ENCODE measurements at regions of chr19 and their contacts with region 1.

Region 1: GRCh38 chr19:17859533-17860330 is at the start of gene RPL18A:
- DNase-seq: peak; percentile 85
- ATAC-seq: peak; percentile 91
- H3K4me3 Mint-ChIP-seq: peak within 1 kb of the TSS; percentile 99
- H3K27ac Mint-ChIP-seq: peak within 1 kb of the TSS; percentile 98
- H3K4me1 Mint-ChIP-seq: peaks cover 47% of the 10 kb centered on the region
- H3K27me3 Mint-ChIP-seq: no peaks in the 10 kb centered on the region
- CTCF ChIP-seq: no peak
- total RNA-seq, gene RPL18A: 4,113 and 4,404 TPM in 2 replicates

Region 2: DNA sequence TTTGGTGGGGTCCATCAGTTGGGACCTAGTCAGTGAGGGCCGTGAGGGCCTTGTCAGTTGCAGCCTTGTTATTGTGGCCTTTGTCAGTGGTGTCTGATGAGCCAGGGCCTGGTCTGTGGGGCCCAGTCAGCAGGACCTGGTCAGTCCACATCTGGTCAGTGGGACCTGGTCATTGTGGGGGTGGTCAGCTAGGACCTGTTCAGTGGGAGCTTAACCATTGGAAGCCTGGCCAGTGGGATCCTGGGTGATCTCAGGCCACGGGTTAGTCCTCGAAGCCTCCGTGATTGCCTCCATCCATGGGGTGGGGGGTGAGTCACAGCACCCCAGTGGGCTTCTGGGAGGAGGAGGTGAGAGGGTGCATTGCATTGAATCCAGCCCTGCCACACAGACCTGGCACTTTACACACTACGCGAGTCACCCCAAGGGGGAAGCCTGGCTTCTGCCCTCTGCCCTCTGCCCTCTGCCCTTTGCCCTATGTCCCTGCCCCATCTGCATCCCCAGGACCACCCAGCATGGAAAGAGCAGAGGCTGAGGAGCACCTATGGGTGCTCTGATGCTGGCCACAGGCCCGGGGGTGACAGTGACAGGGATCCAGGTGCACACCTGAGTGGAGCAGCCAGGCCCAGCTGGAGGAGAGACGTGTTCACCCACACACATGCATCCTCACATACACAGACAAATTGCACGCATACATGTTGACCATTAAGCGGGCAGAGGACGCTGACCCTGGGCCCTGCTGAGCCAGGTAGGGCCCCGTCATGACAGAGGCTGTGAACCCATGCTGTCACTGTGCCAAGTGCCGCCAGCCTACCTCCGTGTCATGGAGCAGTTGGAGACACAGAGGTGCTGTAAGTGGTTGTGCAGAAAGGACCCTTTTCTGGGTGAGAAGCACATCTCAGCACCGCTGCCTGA is 1843.2 kb before region 1 on chr19:
- CTCF ChIA-PET with region 1: no interaction called
- POLR2A ChIA-PET with region 1: no interaction called
- intact Hi-C with region 1: no loop called
- DNase-seq: no peak
- ATAC-seq: no peak
- H3K4me3 Mint-ChIP-seq: no peak overlapping the region
- H3K27ac Mint-ChIP-seq: no peak overlapping the region
- H3K4me1 Mint-ChIP-seq: no peaks in the 10 kb centered on the region
- H3K27me3 Mint-ChIP-seq: no peaks in the 10 kb centered on the region
- CTCF ChIP-seq: no peak

Region 3: GRCh38 chr19:17448131-17448967 is 411.4 kb before region 1 on chr19 and contains the start of gene TMEM221:
- CTCF ChIA-PET with region 1: no interaction called
- POLR2A ChIA-PET with region 1: no interaction called
- intact Hi-C with region 1: loop called (anchors 5 kb)
- DNase-seq: peak; percentile 49
- ATAC-seq: peak; percentile 86
- H3K4me3 Mint-ChIP-seq: peak within 1 kb of the TSS; percentile 19
- H3K27ac Mint-ChIP-seq: no peak within 1 kb of the TSS
- H3K4me1 Mint-ChIP-seq: peaks cover 10% of the 10 kb centered on the region
- H3K27me3 Mint-ChIP-seq: peaks cover 24% of the 10 kb centered on the region
- CTCF ChIP-seq: no peak
- total RNA-seq, gene TMEM221: not detected in 2 replicates

Region 4: GRCh38 chr19:17570791-17571190 is 288.9 kb before region 1 on chr19:
- CTCF ChIA-PET with region 1: no interaction called
- POLR2A ChIA-PET with region 1: no interaction called
- intact Hi-C with region 1: loop called (anchors 5 kb)
- DNase-seq: no peak
- ATAC-seq: no peak
- H3K4me3 Mint-ChIP-seq: no peak overlapping the region
- H3K27ac Mint-ChIP-seq: no peak overlapping the region
- H3K4me1 Mint-ChIP-seq: peaks cover 3% of the 10 kb centered on the region
- H3K27me3 Mint-ChIP-seq: no peaks in the 10 kb centered on the region
- CTCF ChIP-seq: no peak

Region 5: DNA sequence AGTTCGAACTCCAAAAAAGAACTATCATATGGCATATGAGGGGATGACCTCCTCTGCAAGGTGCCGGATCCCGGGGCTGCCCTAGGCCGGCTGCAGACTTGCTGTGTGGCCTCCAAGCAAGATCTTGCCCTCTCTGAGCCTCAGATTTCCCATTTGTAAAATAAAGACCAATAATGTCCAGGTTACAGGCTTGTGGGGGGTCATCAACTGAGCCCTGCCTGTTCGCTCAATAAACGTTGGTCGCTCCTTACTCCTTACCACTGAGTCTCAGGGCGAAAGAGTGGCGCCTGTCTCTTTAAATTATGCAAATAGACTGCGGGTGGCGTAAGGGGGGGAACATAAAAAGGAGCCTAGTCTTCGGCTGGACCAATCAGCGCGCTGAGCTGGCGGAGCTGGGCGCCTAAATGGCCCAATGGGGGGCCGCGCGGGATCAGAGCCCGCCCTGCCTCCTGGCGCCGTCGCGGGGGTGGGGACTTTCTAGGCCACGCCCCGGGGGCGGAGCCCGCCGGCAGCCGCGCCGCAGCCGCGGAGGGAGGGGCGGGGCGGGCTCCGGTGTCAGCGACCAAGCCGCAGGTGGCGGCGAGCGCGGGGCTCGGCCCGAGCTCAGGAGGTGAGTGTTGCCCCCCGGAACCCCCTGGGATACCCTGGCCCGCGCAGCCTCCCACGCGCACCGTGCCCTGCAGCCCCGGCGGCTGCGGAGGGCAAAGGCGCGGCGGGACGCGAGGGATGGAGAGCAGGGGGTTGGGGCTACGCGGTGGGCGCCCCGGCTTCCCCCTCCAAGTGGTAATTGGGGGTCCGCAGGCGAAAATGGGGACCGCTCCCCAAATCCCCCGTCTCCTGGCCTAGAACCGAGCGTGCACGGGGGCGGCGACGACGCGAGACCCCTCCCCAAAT is 112.3 kb before region 1 on chr19:
- CTCF ChIA-PET with region 1: interaction called, 3 read pairs
- POLR2A ChIA-PET with region 1: interaction called, 11 read pairs
- intact Hi-C with region 1: no loop called
- DNase-seq: peak; percentile 97
- ATAC-seq: peak; percentile 83
- H3K4me3 Mint-ChIP-seq: peak overlapping the region; percentile 79
- H3K27ac Mint-ChIP-seq: peak overlapping the region; percentile 70
- H3K4me1 Mint-ChIP-seq: peaks cover 59% of the 10 kb centered on the region
- H3K27me3 Mint-ChIP-seq: no peaks in the 10 kb centered on the region
- CTCF ChIP-seq: no peak

Region 6: DNA sequence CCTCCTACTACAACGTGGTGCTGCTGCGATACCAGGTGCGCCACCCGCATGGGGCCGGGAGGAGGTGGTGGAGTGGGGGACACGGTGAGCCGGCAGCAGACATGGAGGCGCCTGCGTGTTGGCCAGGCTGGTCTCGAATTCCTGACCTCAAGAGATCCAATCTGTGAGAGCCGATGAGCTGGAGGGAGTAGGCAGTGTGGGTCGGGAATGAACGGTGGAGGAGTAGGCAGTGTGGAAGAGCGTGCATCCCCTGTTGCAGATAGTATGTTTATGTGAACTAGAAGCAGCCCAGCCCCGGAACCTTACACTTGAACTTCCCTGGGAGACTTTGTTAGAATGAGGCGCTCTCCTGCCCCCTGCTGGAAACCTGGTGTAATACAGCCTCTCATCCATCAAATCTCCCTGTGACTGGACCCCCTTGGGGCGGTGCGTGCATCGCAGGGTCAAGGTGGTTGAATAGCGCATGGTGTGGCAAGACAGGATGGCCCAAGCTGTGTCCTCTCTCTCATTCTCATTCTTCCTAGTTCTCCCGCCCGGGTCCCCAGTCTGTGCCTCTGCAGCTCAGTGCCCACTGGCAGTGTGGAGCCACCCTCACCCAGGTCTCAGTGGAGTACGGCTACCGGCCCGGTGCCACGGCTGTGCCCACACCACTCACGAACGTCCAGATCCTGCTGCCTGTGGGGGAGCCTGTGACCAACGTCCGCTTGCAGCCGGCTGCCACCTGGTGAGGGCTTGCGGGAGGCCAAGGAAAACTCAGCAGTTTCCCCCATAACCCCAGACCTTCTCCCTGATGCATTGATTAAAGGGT is 75.3 kb before region 1 on chr19:
- CTCF ChIA-PET with region 1: interaction called, 7 read pairs
- POLR2A ChIA-PET with region 1: interaction called, 6 read pairs
- intact Hi-C with region 1: loop called (anchors 1 kb)
- DNase-seq: peak; percentile 62
- ATAC-seq: peak; percentile 89
- H3K4me3 Mint-ChIP-seq: no peak overlapping the region
- H3K27ac Mint-ChIP-seq: no peak overlapping the region
- H3K4me1 Mint-ChIP-seq: peaks cover 9% of the 10 kb centered on the region
- H3K27me3 Mint-ChIP-seq: no peaks in the 10 kb centered on the region
- CTCF ChIP-seq: no peak

Region 7: GRCh38 chr19:17932485-17933338 is 73.0 kb after region 1 on chr19 and contains the start of gene CCDC124:
- CTCF ChIA-PET with region 1: interaction called, 201 read pairs
- POLR2A ChIA-PET with region 1: interaction called, 299 read pairs
- intact Hi-C with region 1: loop called (anchors 1 kb)
- DNase-seq: peak; percentile 87
- ATAC-seq: peak; percentile 96
- H3K4me3 Mint-ChIP-seq: peak within 1 kb of the TSS; percentile 88
- H3K27ac Mint-ChIP-seq: peak within 1 kb of the TSS; percentile 94
- H3K4me1 Mint-ChIP-seq: peaks cover 25% of the 10 kb centered on the region
- H3K27me3 Mint-ChIP-seq: no peaks in the 10 kb centered on the region
- CTCF ChIP-seq: no peak
- total RNA-seq, gene CCDC124: 49.9 and 59.5 TPM in 2 replicates